GM12878 (cell line): ENCODE measurements at regions of chr12 and their contacts with region 1.

Region 1: GRCh38 chr12:20220339-20220738 is 148.0 kb upstream of the PDE3A start:
- DNase-seq: peak; percentile 5
- ATAC-seq: peak; percentile 87
- H3K4me3 ChIP-seq: no peak overlapping the region
- H3K27ac ChIP-seq: no peak overlapping the region
- H3K4me1 ChIP-seq: no peaks in the 10 kb centered on the region
- H3K27me3 ChIP-seq: no peaks in the 10 kb centered on the region
- CTCF ChIP-seq: peak; percentile 15 to 44 (median 35); a peak in 4 of 6 replicates
- EP300 ChIP-seq: no peak
- POLR2A ChIP-seq: no peak
- RAD21 ChIP-seq: peak; percentile 61

Region 2: GRCh38 chr12:19744734-19745218 is 475.6 kb before region 1 on chr12:
- CTCF ChIA-PET with region 1: interaction called, 22 read pairs
- POLR2A ChIA-PET with region 1: no interaction called
- RAD21 ChIA-PET with region 1: no interaction called
- SMC1A ChIA-PET with region 1: interaction called, 18 read pairs
- in situ Hi-C with region 1: no loop called
- intact Hi-C with region 1: loop called (anchors 5 kb)
- DNase-seq: no peak
- ATAC-seq: no peak
- H3K4me3 ChIP-seq: no peak overlapping the region
- H3K27ac ChIP-seq: no peak overlapping the region
- H3K4me1 ChIP-seq: no peaks in the 10 kb centered on the region
- H3K27me3 ChIP-seq: no peaks in the 10 kb centered on the region
- CTCF ChIP-seq: no peak
- EP300 ChIP-seq: no peak
- POLR2A ChIP-seq: no peak
- RAD21 ChIP-seq: no peak